ENCODE measurements at regions of chr12 and their contacts with region 1.

Region 1: DNA sequence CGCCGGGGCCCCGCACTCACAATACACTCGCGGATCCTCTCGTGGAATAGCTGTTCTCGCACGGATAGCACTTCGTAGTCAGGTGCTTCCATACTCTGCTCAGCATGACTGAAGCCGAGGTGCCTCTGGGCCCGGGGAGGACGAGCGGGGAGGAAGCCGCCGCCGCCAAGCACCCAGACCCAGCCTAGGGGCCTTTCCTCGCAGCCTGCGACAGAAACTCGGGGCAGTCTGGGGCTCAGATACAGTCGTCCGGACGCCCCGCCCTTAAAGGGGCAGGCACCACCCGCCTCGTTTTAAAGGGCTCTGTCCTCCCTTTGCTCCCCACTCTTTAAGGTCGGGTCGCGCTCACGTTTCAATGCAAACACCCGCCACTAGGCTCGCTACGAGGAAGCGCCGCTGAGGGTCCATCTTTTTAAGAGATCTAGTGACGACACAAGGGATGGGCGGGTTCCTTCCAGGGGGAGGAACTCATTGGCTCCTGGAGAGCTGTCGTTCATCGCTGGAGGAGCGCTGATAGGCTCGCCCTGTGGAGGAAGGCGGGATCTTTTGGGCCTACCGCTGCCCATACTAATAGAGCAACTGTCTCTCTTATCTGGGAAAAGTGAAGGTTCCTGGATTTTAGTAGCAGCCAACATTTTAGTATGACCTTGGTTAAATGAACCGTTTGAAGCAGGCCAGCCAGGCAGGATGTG is at the start of gene LMBR1L:
- DNase-seq: peak; percentile 99 to 100
- ATAC-seq: peak; percentile 98 to 99
- H3K4me3 ChIP-seq: peak within 1 kb of the TSS; percentile 89
- H3K27ac ChIP-seq: peak within 1 kb of the TSS; percentile 79 to 93
- H3K4me1 ChIP-seq: peaks cover 15% of the 10 kb centered on the region
- CTCF ChIP-seq: no peak
- EP300 ChIP-seq: no peak
- POLR2A ChIP-seq: peak; percentile 65
- RAD21 ChIP-seq: no peak
- polyA plus RNA-seq, gene LMBR1L: 25.1 and 35.7 TPM in 2 replicates

Region 2: GRCh38 chr12:49098035-49098451 is 12.6 kb before region 1 on chr12:
- CTCF ChIA-PET with region 1: interaction called, 132 read pairs
- POLR2A ChIA-PET with region 1: interaction called, 14 read pairs
- DNase-seq: peak; percentile 65 to 74
- ATAC-seq: peak; percentile 41 to 76; a peak in 4 of 6 replicates
- H3K4me3 ChIP-seq: no peak overlapping the region
- H3K27ac ChIP-seq: no peak overlapping the region
- H3K4me1 ChIP-seq: 0 out of 3 replicates have a peak, but pooled peaks cover 5% of the 10 kb centered on the region
- CTCF ChIP-seq: peak; percentile 69
- EP300 ChIP-seq: no peak
- POLR2A ChIP-seq: no peak
- RAD21 ChIP-seq: peak; percentile 36 to 49; a peak in 4 of 5 replicates

Measured in A549 (cell line).